Activated CD4-positive, alpha-beta T cell treated with anti-CD3 and anti-CD28 coated beads for 36 hours (primary cell): ENCODE measurements at regions of chr18 and their contacts with region 1.

Region 1: DNA sequence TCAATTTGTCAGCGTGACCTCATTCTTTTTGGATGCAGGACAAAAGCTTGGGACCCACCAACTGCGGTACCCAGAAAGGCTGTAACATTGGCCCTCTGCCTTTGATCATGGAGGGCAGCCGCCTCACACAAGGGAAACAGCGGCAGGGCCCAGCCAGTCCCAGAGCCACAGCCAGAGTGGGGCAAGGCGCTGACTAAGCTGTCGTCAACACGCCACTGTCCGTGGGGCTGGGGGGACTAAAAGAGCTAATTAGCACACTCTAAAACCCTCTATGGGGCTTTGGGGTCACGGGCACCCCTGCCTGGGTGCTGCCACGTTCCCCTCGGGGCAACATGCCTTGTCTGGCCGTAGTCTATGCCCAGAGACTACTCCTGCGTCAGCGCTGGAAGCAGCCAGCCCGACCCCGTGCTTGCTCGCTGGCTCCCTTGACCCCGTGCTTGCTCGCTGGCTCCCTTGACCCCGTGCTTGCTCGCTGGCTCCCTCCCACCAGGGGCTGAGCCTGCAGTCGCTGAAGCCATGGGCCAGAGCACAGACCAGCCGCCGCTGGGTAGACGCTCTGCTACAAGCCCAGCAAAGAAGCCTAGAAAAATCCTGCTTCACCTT is 598.4 kb downstream of the MBD2 start:
- DNase-seq: no peak
- ATAC-seq: no peak
- H3K4me3 Mint-ChIP-seq: no peak overlapping the region
- H3K27ac Mint-ChIP-seq: no peak overlapping the region
- H3K4me1 Mint-ChIP-seq: no peaks in the 10 kb centered on the region
- H3K27me3 Mint-ChIP-seq: no peaks in the 10 kb centered on the region

Region 2: DNA sequence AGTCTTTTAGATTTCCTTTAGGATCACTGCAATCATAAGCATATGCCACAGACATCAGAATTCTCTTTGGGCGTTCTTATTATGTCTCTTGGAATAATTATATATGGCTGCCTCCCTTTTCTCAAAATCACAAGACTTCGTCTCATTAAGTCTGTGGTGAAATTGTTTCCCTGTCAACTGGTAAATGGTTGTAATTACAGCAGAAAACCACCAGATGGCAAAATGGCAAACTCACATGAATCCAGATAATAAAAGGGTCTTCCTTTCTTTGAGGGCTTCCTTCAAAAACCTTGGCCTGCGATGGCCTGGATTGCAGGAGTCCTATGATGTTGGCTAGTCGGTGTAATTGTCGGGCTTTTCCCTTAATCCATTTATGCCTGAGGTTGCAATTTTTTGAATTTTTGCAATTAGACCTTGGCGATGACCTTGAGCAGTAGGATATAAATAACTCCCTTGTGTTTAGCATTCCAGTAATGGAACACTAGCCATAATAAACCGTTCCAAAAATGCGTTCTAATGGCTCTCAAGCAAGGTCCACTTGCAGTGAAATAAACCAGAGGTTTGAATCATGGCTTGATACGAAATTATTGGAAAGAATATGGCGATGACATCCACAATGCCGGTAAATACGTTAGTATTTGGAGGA is 58.0 kb before region 1 on chr18:
- CTCF ChIA-PET with region 1: no interaction called
- POLR2A ChIA-PET with region 1: no interaction called
- intact Hi-C with region 1: loop called in 1 of 2 experiments (anchors 5 kb)
- DNase-seq: no peak
- ATAC-seq: no peak
- H3K4me3 Mint-ChIP-seq: no peak overlapping the region
- H3K27ac Mint-ChIP-seq: no peak overlapping the region
- H3K4me1 Mint-ChIP-seq: no peaks in the 10 kb centered on the region
- H3K27me3 Mint-ChIP-seq: peaks cover 2% of the 10 kb centered on the region

Region 3: DNA sequence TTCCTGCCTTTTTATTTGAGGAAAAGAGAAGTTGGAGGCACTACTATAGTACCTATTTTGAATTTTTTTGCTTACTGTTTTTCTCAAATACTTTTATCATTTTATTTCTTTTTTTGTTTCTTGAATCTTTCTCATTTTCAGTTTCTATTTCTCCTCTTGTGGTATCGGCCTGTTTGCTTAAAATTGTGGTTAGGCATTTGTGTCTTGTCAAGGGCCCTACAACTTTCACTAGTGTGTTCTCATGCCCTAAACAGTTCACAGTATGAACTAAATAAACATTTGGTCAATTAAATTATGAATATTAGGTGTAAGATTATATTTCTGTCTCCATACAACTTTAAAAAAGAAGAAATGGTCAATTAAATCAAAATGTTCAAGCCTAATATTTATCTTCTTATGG is 15.1 kb before region 1 on chr18:
- CTCF ChIA-PET with region 1: no interaction called
- POLR2A ChIA-PET with region 1: no interaction called
- intact Hi-C with region 1: no loop called
- DNase-seq: no peak
- ATAC-seq: no peak
- H3K4me3 Mint-ChIP-seq: no peak overlapping the region
- H3K27ac Mint-ChIP-seq: no peak overlapping the region
- H3K4me1 Mint-ChIP-seq: no peaks in the 10 kb centered on the region
- H3K27me3 Mint-ChIP-seq: no peaks in the 10 kb centered on the region